H1 (cell line): ENCODE measurements at regions of chr15 and their contacts with region 1.

Region 1: DNA sequence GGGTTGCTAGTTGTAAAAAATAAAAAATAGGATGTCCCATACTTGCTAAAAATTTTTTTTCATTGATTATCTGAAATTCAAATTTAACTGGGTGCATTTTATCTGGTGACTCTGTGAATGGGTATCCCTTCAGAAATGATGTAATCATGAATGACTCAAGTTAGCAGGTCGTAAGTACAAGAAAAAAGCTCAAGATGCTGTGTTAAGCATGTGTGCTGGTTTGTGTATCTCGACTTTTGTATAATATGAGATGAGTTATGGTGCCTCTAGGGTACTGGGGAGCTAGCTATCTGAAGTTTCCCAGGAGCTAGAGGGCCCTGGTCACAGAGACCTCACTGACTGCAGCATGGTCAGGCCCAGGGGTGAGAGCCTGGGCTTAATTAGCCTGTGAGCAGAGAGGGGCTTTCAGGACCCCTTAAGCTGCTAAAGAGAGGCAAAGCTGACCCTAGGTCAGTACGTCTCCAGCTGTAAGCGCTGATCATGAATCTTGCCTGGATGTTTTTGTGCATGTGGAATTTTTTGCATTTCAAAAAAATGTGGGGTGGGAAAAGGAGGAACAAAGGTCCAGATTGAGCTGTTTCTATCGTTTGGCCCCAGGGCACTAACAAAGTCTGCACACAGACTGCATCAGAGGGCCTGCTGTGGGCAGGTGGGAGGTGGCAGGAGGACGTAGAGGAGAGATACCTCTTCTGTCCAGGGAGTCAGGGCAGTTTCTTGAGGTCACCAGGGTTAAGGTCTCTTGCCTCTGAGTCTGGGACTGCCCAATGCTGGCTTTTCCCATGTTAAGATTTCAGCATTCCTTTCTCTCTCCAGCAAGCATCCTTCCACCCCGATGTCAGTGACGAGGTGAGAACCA is 233.2 kb upstream of the TPM1 start:
- DNase-seq: no peak
- H3K4me3 ChIP-seq: no peak overlapping the region
- H3K27ac ChIP-seq: no peak overlapping the region
- H3K4me1 ChIP-seq: peaks cover 0 to 10% (median 8%) of the 10 kb centered on the region in 4 experiments; a peak in 6 of 7 replicates
- H3K27me3 ChIP-seq: peaks cover 0 to 2% (median 0%) of the 10 kb centered on the region in 4 experiments; a peak in 2 of 7 replicates
- CTCF ChIP-seq: no peak
- EP300 ChIP-seq: no peak
- POLR2A ChIP-seq: no peak
- RAD21 ChIP-seq: no peak

Region 2: GRCh38 chr15:62658498-62658897 is 150.8 kb before region 1 on chr15:
- CTCF ChIA-PET with region 1: no interaction called
- POLR2A ChIA-PET with region 1: no interaction called
- DNase-seq: no peak
- H3K4me3 ChIP-seq: no peak overlapping the region
- H3K27ac ChIP-seq: no peak overlapping the region
- H3K4me1 ChIP-seq: no peaks in the 10 kb centered on the region
- H3K27me3 ChIP-seq: no peaks in the 10 kb centered on the region
- CTCF ChIP-seq: no peak
- EP300 ChIP-seq: no peak
- POLR2A ChIP-seq: no peak
- RAD21 ChIP-seq: no peak; a peak in 1 of 4 replicates

Region 3: DNA sequence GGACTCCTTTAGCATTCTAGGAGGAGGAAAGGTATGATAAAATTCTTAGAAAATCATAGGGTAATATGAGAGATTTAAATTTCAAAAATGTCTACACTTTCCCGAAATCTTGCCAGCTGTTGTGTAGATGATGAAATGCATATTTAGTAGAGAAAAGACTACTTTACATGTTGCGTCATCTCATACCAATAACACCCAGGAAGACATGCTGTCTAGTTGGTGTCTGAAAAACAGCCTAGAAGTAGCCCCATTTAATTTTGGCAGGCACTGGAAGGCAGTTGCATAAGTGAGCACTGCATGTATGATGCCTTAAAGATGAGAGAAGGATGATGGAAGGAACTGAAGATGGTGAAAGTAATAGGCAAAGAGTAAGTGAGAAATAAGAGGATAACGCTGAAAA is 77.3 kb before region 1 on chr15:
- CTCF ChIA-PET with region 1: no interaction called
- POLR2A ChIA-PET with region 1: no interaction called
- DNase-seq: no peak
- H3K4me3 ChIP-seq: no peak overlapping the region
- H3K27ac ChIP-seq: no peak overlapping the region
- H3K4me1 ChIP-seq: peaks cover 0 to 6% (median 5%) of the 10 kb centered on the region in 4 experiments; a peak in 5 of 7 replicates
- H3K27me3 ChIP-seq: no peaks in the 10 kb centered on the region
- CTCF ChIP-seq: no peak
- EP300 ChIP-seq: no peak
- POLR2A ChIP-seq: no peak
- RAD21 ChIP-seq: no peak

Region 4: GRCh38 chr15:62797171-62797570 is 12.2 kb before region 1 on chr15:
- CTCF ChIA-PET with region 1: interaction called, 11 read pairs
- POLR2A ChIA-PET with region 1: interaction called, 7 read pairs
- DNase-seq: no peak
- H3K4me3 ChIP-seq: no peak overlapping the region
- H3K27ac ChIP-seq: no peak overlapping the region
- H3K4me1 ChIP-seq: peaks cover 0 to 5% (median 2%) of the 10 kb centered on the region in 4 experiments; a peak in 3 of 7 replicates
- H3K27me3 ChIP-seq: no peaks in the 10 kb centered on the region
- CTCF ChIP-seq: no peak
- EP300 ChIP-seq: no peak
- POLR2A ChIP-seq: no peak
- RAD21 ChIP-seq: no peak

Region 5: GRCh38 chr15:62868507-62868906 is 59.2 kb after region 1 on chr15:
- CTCF ChIA-PET with region 1: no interaction called
- POLR2A ChIA-PET with region 1: no interaction called
- DNase-seq: no peak
- H3K4me3 ChIP-seq: no peak overlapping the region
- H3K27ac ChIP-seq: no peak overlapping the region
- H3K4me1 ChIP-seq: 0 out of 7 replicates have a peak, but pooled peaks cover 0 to 2% (median 0%) of the 10 kb centered on the region in 4 experiments
- H3K27me3 ChIP-seq: no peaks in the 10 kb centered on the region
- CTCF ChIP-seq: no peak
- EP300 ChIP-seq: no peak
- POLR2A ChIP-seq: no peak
- RAD21 ChIP-seq: no peak